PC-9 (cell line): ENCODE measurements at regions of chr17 and their contacts with region 1.

Region 1: GRCh38 chr17:40499551-40500174 is 1.8 kb downstream of the TNS4 start:
- DNase-seq: peak; percentile 65 to 83
- H3K4me3 ChIP-seq: peak overlapping the region; percentile 80
- H3K27ac ChIP-seq: no peak overlapping the region
- H3K4me1 ChIP-seq: peaks cover 47% of the 10 kb centered on the region
- H3K27me3 ChIP-seq: no peaks in the 10 kb centered on the region
- CTCF ChIP-seq: peak; percentile 24; the same call in 1 of the 2 replicates

Region 2: DNA sequence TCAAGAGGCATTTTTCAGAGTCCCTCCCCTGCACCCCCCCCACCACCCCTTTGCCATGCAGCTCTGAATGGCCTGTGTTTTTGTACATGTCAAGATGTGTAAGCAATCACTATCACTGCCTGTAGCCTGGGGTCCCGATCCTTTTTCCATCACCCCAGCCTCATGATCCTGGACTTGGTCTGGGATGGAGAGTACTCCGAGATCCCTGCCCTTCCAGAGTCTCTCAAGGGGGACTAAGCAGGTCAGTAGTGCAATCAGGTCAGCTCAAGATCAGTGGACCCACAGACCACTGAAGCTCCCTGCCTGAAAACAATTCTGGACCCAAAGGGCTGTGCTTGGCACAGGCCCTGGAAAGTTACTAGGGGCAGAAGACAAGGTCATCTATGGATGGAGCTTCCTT is 127.6 kb before region 1 on chr17:
- CTCF ChIA-PET with region 1: no interaction called
- POLR2A ChIA-PET with region 1: interaction called, 19 read pairs
- intact Hi-C with region 1: no loop called
- DNase-seq: no peak
- H3K4me3 ChIP-seq: no peak overlapping the region
- H3K27ac ChIP-seq: peak overlapping the region; percentile 19; the same call in 1 of the 2 replicates
- H3K4me1 ChIP-seq: peaks cover 12% of the 10 kb centered on the region; the same call in 1 of the 2 replicates
- H3K27me3 ChIP-seq: no peaks in the 10 kb centered on the region
- CTCF ChIP-seq: no peak

Region 3: GRCh38 chr17:40457964-40458791 is 41.5 kb before region 1 on chr17:
- CTCF ChIA-PET with region 1: no interaction called
- POLR2A ChIA-PET with region 1: no interaction called
- intact Hi-C with region 1: no loop called
- DNase-seq: no peak
- H3K4me3 ChIP-seq: no peak overlapping the region
- H3K27ac ChIP-seq: no peak overlapping the region
- H3K4me1 ChIP-seq: peaks cover 17% of the 10 kb centered on the region
- H3K27me3 ChIP-seq: no peaks in the 10 kb centered on the region
- CTCF ChIP-seq: no peak

Region 4: GRCh38 chr17:40510328-40510648 is 10.6 kb after region 1 on chr17:
- CTCF ChIA-PET with region 1: no interaction called
- POLR2A ChIA-PET with region 1: interaction called, 10 read pairs
- intact Hi-C with region 1: no loop called
- DNase-seq: peak; percentile 88 to 95
- H3K4me3 ChIP-seq: no peak overlapping the region
- H3K27ac ChIP-seq: no peak overlapping the region
- H3K4me1 ChIP-seq: peaks cover 75% of the 10 kb centered on the region
- H3K27me3 ChIP-seq: no peaks in the 10 kb centered on the region
- CTCF ChIP-seq: no peak

Region 5: GRCh38 chr17:40516581-40517285 is 17.1 kb after region 1 on chr17:
- CTCF ChIA-PET with region 1: no interaction called
- POLR2A ChIA-PET with region 1: interaction called, 6 read pairs
- intact Hi-C with region 1: loop called (anchors 1 kb)
- DNase-seq: peak; percentile 65 to 94
- H3K4me3 ChIP-seq: no peak overlapping the region
- H3K27ac ChIP-seq: peak overlapping the region; percentile 69
- H3K4me1 ChIP-seq: peaks cover 99% of the 10 kb centered on the region
- H3K27me3 ChIP-seq: no peaks in the 10 kb centered on the region
- CTCF ChIP-seq: no peak

Region 6: DNA sequence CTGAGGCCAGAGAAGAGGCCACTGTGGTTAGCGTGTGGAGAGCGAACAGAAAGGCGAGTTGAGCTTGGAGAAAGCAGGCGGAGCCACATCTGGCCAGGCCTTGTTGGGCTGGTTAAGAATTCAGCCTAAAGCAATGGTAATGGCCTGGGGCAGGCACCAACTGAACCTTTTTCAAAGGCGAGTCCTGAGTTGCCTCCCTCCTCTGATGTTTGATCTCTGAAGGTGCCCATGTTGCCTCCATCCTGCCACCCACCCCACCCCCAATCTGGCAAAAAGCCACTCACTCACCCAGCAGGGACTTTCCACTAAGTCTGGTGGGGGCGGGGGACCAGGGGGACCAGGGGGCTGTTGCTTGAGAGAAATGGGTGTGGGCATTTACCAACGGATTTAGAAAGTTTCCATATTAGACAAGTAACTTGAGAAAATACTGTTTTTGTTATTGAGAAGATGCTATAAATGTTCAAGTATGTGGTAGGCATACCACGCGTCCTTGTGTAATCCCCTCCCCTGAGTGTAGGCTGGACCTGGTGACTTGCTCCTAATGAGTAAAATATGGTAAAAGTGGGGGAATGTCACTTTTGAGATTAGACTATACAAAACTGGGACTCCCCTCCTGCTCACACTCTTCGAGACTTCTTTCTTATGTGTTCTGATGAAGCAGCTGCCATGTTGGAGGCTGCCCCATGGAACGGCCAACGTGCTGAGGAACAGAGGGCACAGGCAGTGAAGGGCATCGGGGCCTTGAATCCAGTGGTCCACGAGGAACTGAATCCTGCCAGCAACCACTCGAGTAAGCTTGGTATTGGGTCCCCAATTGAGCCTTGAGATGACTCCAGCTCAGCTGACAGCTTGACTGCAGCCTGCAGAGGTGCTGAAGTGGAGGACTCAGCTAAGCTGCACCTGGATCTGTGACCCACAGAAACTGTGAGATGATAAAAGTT is 31.7 kb after region 1 on chr17:
- CTCF ChIA-PET with region 1: interaction called, 17 read pairs
- POLR2A ChIA-PET with region 1: interaction called, 11 read pairs
- intact Hi-C with region 1: loop called (anchors 1 kb)
- DNase-seq: no peak
- H3K4me3 ChIP-seq: no peak overlapping the region
- H3K27ac ChIP-seq: no peak overlapping the region
- H3K4me1 ChIP-seq: peaks cover 35% of the 10 kb centered on the region
- H3K27me3 ChIP-seq: no peaks in the 10 kb centered on the region
- CTCF ChIP-seq: no peak

Region 7: DNA sequence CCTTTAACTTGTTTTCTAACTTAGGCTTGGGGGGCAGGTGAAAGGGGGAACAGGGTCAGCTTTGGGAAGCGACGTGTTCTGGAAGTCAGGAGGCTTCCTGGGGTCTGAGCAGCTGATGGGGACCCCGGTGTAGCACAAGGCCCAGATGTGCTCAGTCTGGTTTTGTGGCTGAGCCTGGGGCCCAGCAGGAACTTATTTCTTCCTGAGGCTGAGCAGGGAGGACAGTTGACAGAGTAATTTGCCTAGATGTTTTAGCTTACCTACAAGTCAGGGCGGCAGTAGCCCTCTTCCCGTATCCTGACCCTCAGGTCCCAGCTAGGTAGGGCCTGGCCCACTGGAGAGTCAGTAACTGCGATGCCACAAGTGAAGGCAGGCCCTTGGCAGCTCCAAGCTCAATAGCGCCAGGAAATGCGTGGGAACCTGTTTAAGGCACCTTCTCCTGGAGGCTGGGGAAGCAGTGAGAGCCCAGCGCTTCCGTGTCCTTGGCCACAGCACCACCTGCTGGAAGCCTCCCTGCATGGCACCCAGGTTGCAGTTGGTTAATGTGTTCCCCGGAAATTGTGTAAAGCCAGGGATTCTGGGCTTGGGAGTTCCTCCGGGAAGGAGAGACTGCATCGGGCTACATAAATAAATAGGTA is 60.4 kb after region 1 on chr17:
- CTCF ChIA-PET with region 1: interaction called, 4 read pairs
- POLR2A ChIA-PET with region 1: no interaction called
- intact Hi-C with region 1: loop called (anchors 2 kb)
- DNase-seq: peak; percentile 79 to 91
- H3K4me3 ChIP-seq: no peak overlapping the region
- H3K27ac ChIP-seq: no peak overlapping the region
- H3K4me1 ChIP-seq: peaks cover 4% of the 10 kb centered on the region; the same call in 1 of the 2 replicates
- H3K27me3 ChIP-seq: peaks cover 19% of the 10 kb centered on the region
- CTCF ChIP-seq: peak; percentile 95

Region 8: GRCh38 chr17:40588552-40588951 is 88.9 kb after region 1 on chr17:
- CTCF ChIA-PET with region 1: no interaction called
- POLR2A ChIA-PET with region 1: no interaction called
- intact Hi-C with region 1: no loop called
- DNase-seq: no peak
- H3K4me3 ChIP-seq: no peak overlapping the region
- H3K27ac ChIP-seq: no peak overlapping the region
- H3K4me1 ChIP-seq: no peaks in the 10 kb centered on the region
- H3K27me3 ChIP-seq: 0 out of 2 replicates have a peak, but pooled peaks cover 2% of the 10 kb centered on the region
- CTCF ChIP-seq: no peak

Region 9: GRCh38 chr17:40632216-40632615 is 132.6 kb after region 1 on chr17:
- CTCF ChIA-PET with region 1: no interaction called
- POLR2A ChIA-PET with region 1: no interaction called
- intact Hi-C with region 1: no loop called
- DNase-seq: no peak
- H3K4me3 ChIP-seq: no peak overlapping the region
- H3K27ac ChIP-seq: no peak overlapping the region
- H3K4me1 ChIP-seq: no peaks in the 10 kb centered on the region
- H3K27me3 ChIP-seq: no peaks in the 10 kb centered on the region
- CTCF ChIP-seq: no peak